Common myeloid progenitor, CD34-positive (primary cell): ENCODE measurements at regions of chr5 and their contacts with region 1.

Region 1: GRCh38 chr5:10577371-10578292 is 13.8 kb downstream of the ANKRD33B start:
- DNase-seq: no peak
- H3K4me3 ChIP-seq: no peak overlapping the region
- H3K27ac ChIP-seq: no peak overlapping the region
- H3K4me1 ChIP-seq: peaks cover 2 to 28% (median 24%) of the 10 kb centered on the region in 4 experiments
- H3K27me3 ChIP-seq: no peaks in the 10 kb centered on the region

Region 2: GRCh38 chr5:10564838-10565784 is 12.5 kb before region 1 on chr5:
- CTCF ChIA-PET with region 1: interaction called, 13 read pairs
- POLR2A ChIA-PET with region 1: interaction called, 3 read pairs
- DNase-seq: peak in 1 of 3 donors; percentile 49
- H3K4me3 ChIP-seq: peak overlapping the region; percentile 25 to 88 (median 79)
- H3K27ac ChIP-seq: no peak overlapping the region
- H3K4me1 ChIP-seq: peaks cover 4 to 51% (median 48%) of the 10 kb centered on the region in 4 experiments
- H3K27me3 ChIP-seq: no peaks in the 10 kb centered on the region